Aorta (tissue), 5 donors: ENCODE measurements at regions of chr6 and their contacts with region 1.

Region 1: DNA sequence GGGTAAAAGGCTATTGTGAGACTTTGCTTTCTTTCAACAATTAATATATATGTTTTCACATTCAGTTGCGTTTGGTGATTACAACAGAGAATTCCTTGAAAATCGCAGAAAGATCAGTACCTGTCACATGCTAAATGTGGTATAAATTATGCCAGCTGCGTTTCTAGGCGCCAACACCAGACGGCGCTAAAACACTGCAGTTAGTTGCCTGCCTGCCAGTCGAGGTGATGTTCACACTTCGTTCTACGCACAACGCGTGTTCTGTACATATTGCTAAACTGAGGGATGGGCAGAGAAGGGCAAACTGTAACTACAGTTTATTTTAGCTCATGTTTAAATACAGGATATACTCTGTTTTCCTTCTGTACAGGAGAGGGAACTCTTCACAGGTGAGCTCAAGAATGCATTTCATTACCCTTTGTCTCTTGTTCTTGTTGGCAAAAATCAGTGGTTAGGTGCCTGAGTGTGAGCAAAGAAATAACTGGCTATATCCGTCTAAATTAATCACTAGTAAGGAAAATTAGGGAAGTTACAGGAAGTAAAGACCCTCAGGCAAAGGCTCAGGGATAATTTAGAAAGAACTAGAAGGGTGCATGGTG is 100.1 kb upstream of the RGS17 start:
- DNase-seq: peak; percentile 58 to 83
- ATAC-seq: peak; percentile 57
- H3K4me3 ChIP-seq: no peak overlapping the region
- H3K27ac ChIP-seq: no peak overlapping the region
- H3K4me1 ChIP-seq: no peaks in the 10 kb centered on the region
- H3K27me3 ChIP-seq: no peaks in the 10 kb centered on the region

Region 2: DNA sequence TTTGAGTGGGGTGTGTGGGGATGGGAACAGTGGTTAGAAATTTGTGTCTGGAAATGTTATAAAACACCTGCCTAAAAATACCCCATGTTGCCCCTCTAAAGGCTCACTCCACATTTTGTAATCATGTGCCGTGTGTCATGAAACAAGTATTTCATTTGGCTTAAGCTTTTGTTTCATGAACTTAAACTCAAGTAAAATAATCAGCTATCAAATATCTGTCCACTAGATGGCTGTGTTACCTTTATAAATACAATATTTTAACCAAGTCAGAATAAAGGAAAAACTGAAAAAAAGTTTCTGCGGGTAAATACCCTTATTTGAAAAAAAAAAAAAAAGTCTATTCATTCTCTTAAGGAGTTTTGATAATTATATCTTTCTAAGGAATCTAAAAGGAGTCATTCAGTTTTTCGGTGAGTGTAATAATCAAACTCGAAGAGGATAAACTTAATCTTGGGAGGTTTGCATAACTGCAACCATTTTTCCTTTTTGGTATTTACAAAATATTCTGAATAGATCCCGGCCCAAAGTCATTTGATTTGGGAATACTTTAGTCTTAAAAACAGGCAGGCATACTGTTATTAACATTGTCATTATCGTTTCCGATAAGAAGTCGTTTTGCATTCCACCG is 198.8 kb before region 1 on chr6:
- intact Hi-C with region 1: loop called in 1 of 2 experiments (anchors 10 kb)
- DNase-seq: no peak
- ATAC-seq: peak; percentile 52
- H3K4me3 ChIP-seq: no peak overlapping the region
- H3K27ac ChIP-seq: no peak overlapping the region
- H3K4me1 ChIP-seq: no peaks in the 10 kb centered on the region
- H3K27me3 ChIP-seq: no peaks in the 10 kb centered on the region

Region 3: DNA sequence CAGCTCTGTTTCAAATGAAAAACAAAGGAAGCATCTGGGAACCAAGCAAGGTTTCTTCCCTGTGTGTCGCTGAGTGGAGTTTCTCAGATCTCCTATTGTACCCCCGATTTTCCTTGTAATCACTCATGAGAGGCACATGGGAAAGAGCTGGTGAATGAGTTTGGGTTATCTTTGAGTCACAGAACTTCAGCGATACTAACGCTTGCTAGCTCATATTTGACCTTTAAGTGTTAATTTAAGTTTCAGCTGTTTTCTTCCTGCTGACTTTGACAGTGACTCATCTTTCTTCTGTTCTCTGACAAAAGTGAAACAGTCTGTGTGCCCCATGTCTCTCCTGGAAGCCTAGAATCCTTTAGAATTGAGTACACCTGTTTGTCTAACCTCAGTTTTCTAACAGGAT is 161.0 kb after region 1 on chr6:
- intact Hi-C with region 1: no loop called
- DNase-seq: no peak
- ATAC-seq: no peak
- H3K4me3 ChIP-seq: no peak overlapping the region
- H3K27ac ChIP-seq: no peak overlapping the region
- H3K4me1 ChIP-seq: no peaks in the 10 kb centered on the region
- H3K27me3 ChIP-seq: no peaks in the 10 kb centered on the region

Region 4: DNA sequence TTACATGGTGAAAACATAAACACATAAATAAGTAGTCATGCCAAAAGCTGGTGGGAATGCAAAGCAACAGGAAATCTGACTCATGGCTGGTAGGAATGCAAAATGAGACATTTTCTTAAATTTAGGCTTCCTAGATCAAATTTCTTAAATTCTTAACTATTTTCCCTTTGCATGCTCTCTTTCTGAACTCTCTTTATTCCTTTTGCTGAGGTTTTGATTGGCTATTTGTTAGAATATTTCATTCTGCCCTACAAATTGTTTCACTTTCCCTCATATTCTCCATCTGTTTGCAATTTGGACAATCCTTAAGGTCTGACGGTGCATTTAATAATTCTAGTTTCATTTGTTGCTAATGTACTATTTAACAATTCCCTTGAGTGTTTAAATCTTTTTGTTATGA is 337.5 kb after region 1 on chr6:
- intact Hi-C with region 1: loop called in 1 of 2 experiments (anchors 10 kb)
- DNase-seq: no peak
- ATAC-seq: no peak
- H3K4me3 ChIP-seq: no peak overlapping the region
- H3K27ac ChIP-seq: no peak overlapping the region
- H3K4me1 ChIP-seq: peaks cover 1 to 5% of the 10 kb centered on the region in 2 donors
- H3K27me3 ChIP-seq: no peaks in the 10 kb centered on the region

Region 5: GRCh38 chr6:153941768-153942167 is 710.6 kb after region 1 on chr6:
- intact Hi-C with region 1: loop called (anchors 2 to 5 kb)
- DNase-seq: no peak
- ATAC-seq: no peak
- H3K4me3 ChIP-seq: no peak overlapping the region
- H3K27ac ChIP-seq: no peak overlapping the region
- H3K4me1 ChIP-seq: no peaks in the 10 kb centered on the region
- H3K27me3 ChIP-seq: no peaks in the 10 kb centered on the region

Region 6: DNA sequence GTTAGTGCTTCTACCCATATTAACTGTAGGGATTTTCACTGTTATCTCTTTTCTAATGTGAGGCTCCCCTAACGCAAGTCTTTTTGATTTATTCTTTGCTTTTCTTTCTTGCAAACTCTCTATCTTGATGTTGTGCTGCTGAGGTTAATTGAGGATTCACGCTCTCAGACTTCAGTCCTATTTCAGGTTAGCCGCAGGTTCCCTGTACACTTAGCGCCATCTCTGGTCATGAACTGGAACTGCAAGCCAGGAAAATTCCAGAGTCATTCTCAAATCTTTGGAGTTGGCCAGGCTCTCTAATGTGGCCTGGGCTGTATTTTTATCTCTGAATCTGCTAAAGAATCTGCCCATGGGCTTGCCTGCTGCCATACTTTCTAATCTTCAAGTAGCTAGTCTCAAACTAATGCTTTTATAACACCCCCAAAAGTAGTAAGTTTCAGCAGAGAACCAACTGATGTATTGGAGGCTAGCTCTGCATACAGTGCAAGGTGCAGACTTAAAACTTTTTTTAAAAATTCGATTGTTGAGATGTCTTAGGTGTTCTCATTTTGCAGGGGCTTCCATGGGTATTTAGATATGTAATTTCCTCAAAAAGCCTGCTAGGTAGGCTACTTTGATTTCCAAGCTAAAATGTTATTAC is 716.8 kb after region 1 on chr6:
- intact Hi-C with region 1: loop called (anchors 2 to 5 kb)
- DNase-seq: no peak
- ATAC-seq: peak; percentile 76
- H3K4me3 ChIP-seq: peak overlapping the region in 1 of 2 donors; percentile 54
- H3K27ac ChIP-seq: no peak overlapping the region
- H3K4me1 ChIP-seq: no peaks in the 10 kb centered on the region
- H3K27me3 ChIP-seq: no peaks in the 10 kb centered on the region

Region 7: GRCh38 chr6:154276810-154277628 is 1045.9 kb after region 1 on chr6:
- intact Hi-C with region 1: loop called in 1 of 2 experiments (anchors 10 kb)
- DNase-seq: no peak
- ATAC-seq: no peak
- H3K4me3 ChIP-seq: no peak overlapping the region
- H3K27ac ChIP-seq: no peak overlapping the region
- H3K4me1 ChIP-seq: peaks cover 0 to 7% of the 10 kb centered on the region in 2 donors
- H3K27me3 ChIP-seq: no peaks in the 10 kb centered on the region